HCT116 (cell line): ENCODE measurements at regions of chr2 and their contacts with region 1.

Region 1: GRCh38 chr2:231900486-231900942 is 25.7 kb downstream of the NPPC start:
- DNase-seq: peak; percentile 83
- ATAC-seq: peak; percentile 98
- H3K4me3 ChIP-seq: peak overlapping the region; percentile 31 to 37
- H3K27ac ChIP-seq: no peak overlapping the region
- H3K4me1 ChIP-seq: peaks cover 7 to 19% of the 10 kb centered on the region in 2 experiments; a peak in 3 of 4 replicates
- H3K27me3 ChIP-seq: no peaks in the 10 kb centered on the region
- CTCF ChIP-seq: peak; percentile 92 to 96 (median 94)
- POLR2A ChIP-seq: no peak
- RAD21 ChIP-seq: peak; percentile 79

Region 2: DNA sequence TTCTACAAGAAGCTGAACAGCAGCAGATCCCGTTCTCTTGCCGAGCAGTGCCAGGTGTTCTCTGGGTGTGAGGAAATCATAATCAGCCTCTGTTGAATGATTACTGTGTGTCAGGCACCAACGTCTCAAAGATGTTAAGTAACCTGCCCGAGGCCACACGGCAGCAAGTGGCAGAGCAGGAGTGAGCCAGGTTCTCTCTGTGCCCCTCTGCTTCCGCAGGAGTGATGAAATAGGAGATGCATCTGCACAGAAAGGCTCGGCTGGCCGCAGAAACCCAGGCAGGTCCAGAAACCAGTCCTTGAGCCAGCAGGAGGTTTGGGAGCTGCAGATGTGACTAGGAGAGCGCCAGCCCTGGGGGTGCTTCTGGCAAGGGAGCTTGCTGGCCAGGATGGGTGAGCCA is 45.8 kb before region 1 on chr2:
- CTCF ChIA-PET with region 1: interaction called, 12 read pairs
- POLR2A ChIA-PET with region 1: no interaction called
- RAD21 ChIA-PET with region 1: no interaction called
- intact Hi-C with region 1: loop called (anchors 1 kb)
- DNase-seq: no peak
- ATAC-seq: no peak
- H3K4me3 ChIP-seq: no peak overlapping the region
- H3K27ac ChIP-seq: no peak overlapping the region
- H3K4me1 ChIP-seq: no peaks in the 10 kb centered on the region
- H3K27me3 ChIP-seq: peaks cover 12% of the 10 kb centered on the region; the same call in 1 of the 2 replicates
- CTCF ChIP-seq: no peak
- POLR2A ChIP-seq: no peak
- RAD21 ChIP-seq: no peak

Region 3: GRCh38 chr2:231883468-231883881 is 17.0 kb before region 1 on chr2:
- CTCF ChIA-PET with region 1: interaction called, 13 read pairs
- POLR2A ChIA-PET with region 1: no interaction called
- RAD21 ChIA-PET with region 1: no interaction called
- intact Hi-C with region 1: no loop called
- DNase-seq: no peak
- ATAC-seq: no peak
- H3K4me3 ChIP-seq: no peak overlapping the region
- H3K27ac ChIP-seq: no peak overlapping the region
- H3K4me1 ChIP-seq: no peaks in the 10 kb centered on the region
- H3K27me3 ChIP-seq: no peaks in the 10 kb centered on the region
- CTCF ChIP-seq: no peak
- POLR2A ChIP-seq: no peak
- RAD21 ChIP-seq: no peak

Region 4: DNA sequence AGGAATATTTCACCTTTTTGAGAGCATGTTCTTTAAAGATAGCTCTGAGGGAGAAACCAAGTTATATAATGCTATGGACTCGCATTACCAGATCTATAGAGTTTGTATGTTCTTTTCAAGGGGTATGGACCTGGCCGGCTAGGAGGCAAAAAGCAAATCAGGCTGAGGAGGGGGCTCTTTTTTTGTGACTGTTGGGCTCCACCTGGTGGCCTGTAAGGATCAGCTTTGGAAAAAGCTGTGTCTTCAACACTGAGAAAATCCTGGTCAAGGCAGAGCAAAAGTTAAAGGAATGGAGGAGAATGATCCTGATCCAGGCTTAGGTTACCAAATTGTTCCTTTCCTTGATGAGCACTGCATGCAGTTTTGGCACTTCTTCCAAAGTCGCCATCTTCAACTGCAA is 241.5 kb after region 1 on chr2:
- CTCF ChIA-PET with region 1: interaction called, 13 read pairs
- POLR2A ChIA-PET with region 1: no interaction called
- RAD21 ChIA-PET with region 1: no interaction called
- intact Hi-C with region 1: no loop called
- DNase-seq: peak; percentile 12
- ATAC-seq: peak; percentile 73
- H3K4me3 ChIP-seq: no peak overlapping the region
- H3K27ac ChIP-seq: no peak overlapping the region
- H3K4me1 ChIP-seq: no peaks in the 10 kb centered on the region
- H3K27me3 ChIP-seq: no peaks in the 10 kb centered on the region
- CTCF ChIP-seq: peak; percentile 73 to 85 (median 81); a peak in 5 of 6 replicates
- POLR2A ChIP-seq: no peak
- RAD21 ChIP-seq: peak; percentile 82

Region 5: GRCh38 chr2:232438951-232439757 is 538.6 kb after region 1 on chr2:
- CTCF ChIA-PET with region 1: interaction called, 14 read pairs
- POLR2A ChIA-PET with region 1: no interaction called
- RAD21 ChIA-PET with region 1: no interaction called
- intact Hi-C with region 1: loop called (anchors 1 kb)
- DNase-seq: no peak
- ATAC-seq: peak; percentile 80
- H3K4me3 ChIP-seq: no peak overlapping the region
- H3K27ac ChIP-seq: no peak overlapping the region
- H3K4me1 ChIP-seq: peaks cover 0 to 6% of the 10 kb centered on the region in 2 experiments; a peak in 2 of 4 replicates
- H3K27me3 ChIP-seq: no peaks in the 10 kb centered on the region
- CTCF ChIP-seq: peak in 2 of 3 experiments; percentile 33 to 46; a peak in 3 of 6 replicates
- POLR2A ChIP-seq: no peak
- RAD21 ChIP-seq: peak; percentile 59